GM12878 (cell line): ENCODE measurements at regions of chr6 and their contacts with region 1.

Region 1: DNA sequence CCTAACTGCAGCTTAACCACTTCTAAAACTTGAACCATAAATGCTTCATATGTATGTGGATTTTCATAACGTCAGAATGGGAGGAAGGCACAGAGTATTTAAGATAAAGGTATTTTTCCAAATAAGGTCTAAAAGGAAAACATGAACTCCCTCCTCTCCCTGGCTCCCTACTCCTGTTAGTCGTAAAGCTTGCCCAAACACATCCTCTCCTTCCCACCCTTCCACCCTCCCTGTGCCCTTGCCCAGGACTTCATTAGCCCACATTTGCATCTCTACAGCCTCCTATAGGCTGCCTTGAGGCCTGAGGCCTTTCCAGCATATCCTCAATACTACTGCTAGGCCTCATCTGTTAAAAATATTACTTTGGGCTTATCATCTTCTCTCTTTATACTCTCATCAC is 17.1 kb upstream of the SMIM13 start:
- DNase-seq: no peak
- ATAC-seq: no peak
- H3K4me3 ChIP-seq: no peak overlapping the region
- H3K27ac ChIP-seq: no peak overlapping the region
- H3K4me1 ChIP-seq: no peaks in the 10 kb centered on the region
- H3K27me3 ChIP-seq: no peaks in the 10 kb centered on the region
- CTCF ChIP-seq: no peak
- EP300 ChIP-seq: no peak
- POLR2A ChIP-seq: no peak
- RAD21 ChIP-seq: no peak

Region 2: GRCh38 chr6:10954590-10955010 is 121.9 kb before region 1 on chr6:
- CTCF ChIA-PET with region 1: interaction called, 114 read pairs
- POLR2A ChIA-PET with region 1: no interaction called
- RAD21 ChIA-PET with region 1: interaction called, 4 read pairs
- SMC1A ChIA-PET with region 1: interaction called, 85 read pairs
- in situ Hi-C with region 1: no loop called
- intact Hi-C with region 1: no loop called
- DNase-seq: peak; percentile 31
- ATAC-seq: peak; percentile 99
- H3K4me3 ChIP-seq: no peak overlapping the region
- H3K27ac ChIP-seq: no peak overlapping the region
- H3K4me1 ChIP-seq: no peaks in the 10 kb centered on the region
- H3K27me3 ChIP-seq: no peaks in the 10 kb centered on the region
- CTCF ChIP-seq: peak; percentile 89 to 97 (median 92)
- EP300 ChIP-seq: no peak
- POLR2A ChIP-seq: no peak
- RAD21 ChIP-seq: peak; percentile 70